ENCODE measurements at regions of chr2 and their contacts with region 1.

Region 1: GRCh38 chr2:224160917-224161316 is 121.8 kb upstream of the SERPINE2 start:
- DNase-seq: no peak
- ATAC-seq: peak; percentile 54

Region 2: DNA sequence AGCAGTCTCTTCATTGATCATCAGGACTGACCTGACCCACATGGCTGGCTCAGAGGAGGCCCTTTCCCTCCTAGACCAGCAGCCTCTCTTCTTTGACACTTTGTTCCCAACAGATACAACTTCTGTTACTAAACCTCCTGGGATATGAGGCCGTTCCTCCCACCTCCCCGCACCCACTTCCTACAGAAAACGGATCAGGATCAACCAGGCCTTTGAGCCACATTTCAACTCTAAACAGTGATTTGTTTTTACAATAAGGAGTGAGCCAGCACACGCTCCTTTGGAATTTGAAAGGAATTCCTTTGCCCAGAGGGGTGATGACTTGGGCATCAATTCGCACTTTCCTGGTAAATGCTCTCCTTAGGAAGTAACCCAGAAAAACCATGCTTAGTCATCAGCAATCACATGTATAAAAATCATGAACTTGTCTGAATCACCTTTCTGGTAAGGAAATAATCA is 60.6 kb after region 1 on chr2:
- intact Hi-C with region 1: no loop called
- DNase-seq: no peak
- ATAC-seq: peak; percentile 73

Region 3: GRCh38 chr2:224278531-224278930 is 117.6 kb after region 1 on chr2:
- intact Hi-C with region 1: loop called (anchors 10 kb)
- DNase-seq: no peak
- ATAC-seq: no peak